HEK293T (cell line): ENCODE measurements at regions of chr4 and their contacts with region 1.

Region 1: GRCh38 chr4:700587-701264 is 4.9 kb upstream of the PCGF3 start:
- DNase-seq: no peak

Region 2: DNA sequence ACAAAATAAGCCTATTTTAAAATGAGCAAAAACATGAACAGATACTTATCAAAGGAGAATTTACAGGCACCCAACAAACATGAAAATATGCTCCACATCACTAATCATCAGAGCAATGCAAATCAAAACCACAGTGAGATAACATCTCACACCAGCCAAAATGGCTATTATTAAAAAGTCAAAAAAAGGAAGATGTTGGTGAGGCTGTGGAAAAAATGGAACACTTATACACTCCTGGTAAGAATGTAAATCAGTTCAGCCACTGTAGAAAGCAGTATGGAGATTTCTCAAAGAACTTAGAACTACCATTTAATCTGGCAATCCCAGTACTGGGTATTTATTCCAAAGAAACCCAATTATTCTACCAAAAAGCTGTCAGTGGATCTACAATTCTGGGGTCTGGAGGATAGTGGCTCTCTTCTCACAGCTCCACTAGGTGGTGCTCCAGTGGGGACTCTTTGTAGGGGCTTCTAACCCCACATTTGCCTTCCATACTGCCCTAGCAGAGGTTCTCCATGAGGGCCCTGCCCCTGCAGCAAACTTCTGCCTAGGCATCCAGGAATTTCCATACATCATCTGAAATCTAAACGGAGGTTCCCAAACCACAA is 386.3 kb before region 1 on chr4:
- CTCF ChIA-PET with region 1: no interaction called
- POLR2A ChIA-PET with region 1: no interaction called
- DNase-seq: no peak

Region 3: DNA sequence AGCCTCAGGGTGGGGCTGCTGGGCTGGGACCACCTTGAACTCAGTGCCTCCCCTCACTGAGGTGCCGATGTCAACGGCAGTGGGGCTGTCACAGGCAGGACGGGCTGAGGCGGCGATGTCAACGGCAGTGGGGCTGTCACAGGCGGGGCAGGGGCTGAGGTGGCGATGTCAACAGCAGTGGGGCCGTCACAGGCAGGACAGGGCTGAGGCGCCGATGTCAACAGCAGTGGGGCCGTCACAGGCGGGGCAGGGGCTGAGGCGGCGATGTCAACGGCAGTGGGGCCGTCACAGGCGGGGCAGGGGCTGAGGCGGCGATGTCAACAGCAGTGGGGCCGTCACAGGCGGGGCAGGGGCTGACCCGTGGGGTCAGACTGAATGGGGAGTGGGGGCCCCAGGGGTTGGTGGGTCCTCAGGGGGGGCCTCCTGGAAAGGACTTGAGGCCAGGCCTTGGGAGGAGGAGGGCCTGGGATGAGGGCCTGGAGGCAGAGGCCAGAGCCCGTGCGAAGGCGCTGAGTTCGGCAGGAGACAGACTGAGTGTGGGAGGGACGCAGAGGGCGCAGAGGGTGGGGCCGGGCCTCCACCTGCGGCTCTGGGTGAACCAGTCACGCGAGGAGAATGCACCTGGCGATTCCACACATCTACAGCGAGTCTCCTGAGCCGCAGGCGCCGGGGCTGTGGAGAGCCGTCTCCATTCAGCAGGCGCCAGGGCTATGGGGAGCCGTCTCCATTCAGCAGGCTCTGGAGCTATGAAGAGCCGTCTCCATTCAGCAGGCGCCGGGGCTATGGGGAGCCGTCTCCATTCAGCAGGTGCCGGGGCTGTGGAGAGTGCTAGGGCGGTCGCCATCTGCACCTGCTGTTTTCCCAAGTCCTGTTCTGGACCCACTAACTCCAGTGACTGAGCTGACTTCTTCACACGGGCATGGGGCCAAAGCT is 49.5 kb before region 1 on chr4:
- CTCF ChIA-PET with region 1: no interaction called
- POLR2A ChIA-PET with region 1: no interaction called
- DNase-seq: no peak

Region 4: DNA sequence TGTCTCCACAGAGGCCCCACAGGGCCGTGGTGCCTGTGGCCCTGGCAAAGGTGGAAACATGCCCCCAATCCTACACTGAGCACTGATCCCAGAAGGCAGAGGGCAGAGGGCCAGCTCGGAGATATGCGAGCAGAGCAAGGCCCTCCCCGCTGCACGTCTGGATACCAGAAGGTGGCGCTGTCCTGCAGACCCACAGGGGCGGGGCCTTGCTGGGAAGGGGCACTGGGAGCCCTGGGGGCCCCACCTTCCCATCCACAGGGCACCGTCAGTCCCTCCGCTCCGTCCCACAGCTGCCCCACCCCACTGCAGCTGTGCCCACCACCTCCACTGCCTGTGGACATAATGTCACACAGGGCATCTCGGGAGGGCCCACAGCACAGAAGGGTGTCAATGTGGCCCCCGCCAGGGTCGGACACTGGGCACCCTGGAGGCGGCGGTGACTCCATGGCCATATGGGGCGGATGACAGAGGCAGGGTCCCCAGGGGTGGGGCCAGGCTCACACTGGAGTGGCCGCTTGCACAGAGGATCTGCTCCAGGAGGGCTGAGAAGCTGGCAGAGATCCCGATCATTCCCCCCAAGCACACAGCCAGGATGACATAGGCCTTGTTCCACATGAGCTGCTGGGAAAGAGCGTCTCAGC is 16.6 kb before region 1 on chr4:
- CTCF ChIA-PET with region 1: interaction called, 11 read pairs
- POLR2A ChIA-PET with region 1: interaction called, 3 read pairs
- DNase-seq: peak; percentile 79

Region 5: GRCh38 chr4:808860-809570 is 108.3 kb after region 1 on chr4:
- CTCF ChIA-PET with region 1: no interaction called
- POLR2A ChIA-PET with region 1: no interaction called
- DNase-seq: no peak